ENCODE measurements at regions of chrX and their contacts with region 1.

Region 1: DNA sequence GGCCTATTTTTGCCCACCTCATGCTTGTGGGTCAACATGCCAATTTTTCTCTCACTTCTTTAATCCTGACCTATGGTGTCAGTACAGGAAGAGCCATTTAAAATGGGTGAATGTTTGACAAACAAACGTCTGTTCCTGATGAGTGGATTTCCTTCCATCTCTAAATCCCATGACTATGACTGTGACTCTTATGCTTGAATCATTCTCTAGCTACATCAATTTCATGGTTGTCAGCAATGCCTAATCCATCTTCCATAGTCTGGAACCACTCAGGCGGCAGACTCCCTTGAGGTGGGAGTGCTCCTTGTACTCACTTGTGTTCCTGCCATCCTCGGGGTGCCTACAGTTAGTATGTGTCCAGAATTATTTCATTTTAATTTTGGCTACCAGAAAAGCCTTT is 194.9 kb upstream of the RPS6KA3 start:
- DNase-seq: no peak
- ATAC-seq: no peak
- H3K4me3 ChIP-seq: no peak overlapping the region
- H3K4me3 Mint-ChIP-seq: no peak overlapping the region
- H3K27ac ChIP-seq: no peak overlapping the region
- H3K27ac Mint-ChIP-seq: no peak overlapping the region
- H3K4me1 ChIP-seq: peaks cover 0 to 3% of the 10 kb centered on the region in 2 experiments
- H3K4me1 Mint-ChIP-seq: peaks cover 8 to 23% (median 12%) of the 10 kb centered on the region in 3 donors
- H3K27me3 ChIP-seq: no peaks in the 10 kb centered on the region
- H3K27me3 Mint-ChIP-seq: peaks cover 0 to 29% of the 10 kb centered on the region in 2 donors

Region 2: DNA sequence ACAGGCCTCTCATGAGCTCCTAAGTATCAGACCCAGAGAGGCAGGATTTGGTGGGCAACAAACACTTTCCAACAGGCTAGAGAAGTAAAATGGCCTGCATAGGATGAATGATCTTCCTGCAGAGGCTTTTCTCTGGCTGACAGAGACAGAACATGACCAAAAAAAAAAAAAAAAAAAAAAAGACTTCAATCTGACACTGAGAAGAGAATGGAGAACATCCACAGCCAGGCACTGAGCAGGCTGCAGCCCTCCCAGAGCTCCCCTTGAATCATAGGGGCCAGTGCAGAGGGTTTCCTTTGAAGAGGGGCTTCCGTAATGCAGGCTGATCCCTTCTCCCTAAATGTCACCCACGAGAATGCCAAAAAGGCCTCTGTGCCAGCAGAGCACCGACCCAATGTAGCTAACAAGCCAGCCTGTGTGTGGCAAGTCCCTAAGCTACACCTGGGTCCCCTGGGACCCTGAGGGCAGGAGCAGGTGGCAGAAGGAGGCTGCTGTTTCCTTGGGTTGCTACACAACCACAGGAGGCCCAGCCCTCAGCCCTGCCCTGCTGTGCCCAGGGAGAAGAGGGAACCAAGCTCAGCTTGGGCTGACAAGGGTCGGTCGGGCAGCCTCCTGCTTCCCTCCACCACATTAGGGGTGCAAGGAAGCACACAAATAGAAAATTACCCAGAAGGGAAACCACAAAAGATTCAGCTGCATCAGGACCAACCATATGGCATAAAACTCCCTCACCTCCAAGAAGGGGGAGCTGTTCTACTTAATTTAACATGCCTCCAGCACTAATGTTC is 400.4 kb before region 1 on chrX:
- CTCF ChIA-PET with region 1: interaction called in 1 of 2 experiments, 15 read pairs
- POLR2A ChIA-PET with region 1: no interaction called
- DNase-seq: peak in 5 of 35 experiments; percentile 0 to 33 (median 2)
- ATAC-seq: peak in 2 of 4 experiments; percentile 32 to 52
- H3K4me3 ChIP-seq: no peak overlapping the region
- H3K4me3 Mint-ChIP-seq: no peak overlapping the region
- H3K27ac ChIP-seq: no peak overlapping the region
- H3K27ac Mint-ChIP-seq: no peak overlapping the region
- H3K4me1 ChIP-seq: no peaks in the 10 kb centered on the region
- H3K4me1 Mint-ChIP-seq: peaks cover 7 to 9% (median 8%) of the 10 kb centered on the region in 3 donors
- H3K27me3 ChIP-seq: no peaks in the 10 kb centered on the region
- H3K27me3 Mint-ChIP-seq: no peaks in the 10 kb centered on the region

Region 3: GRCh38 chrX:20309806-20310205 is 151.8 kb before region 1 on chrX:
- CTCF ChIA-PET with region 1: interaction called in 1 of 2 experiments, 10 read pairs
- POLR2A ChIA-PET with region 1: no interaction called
- DNase-seq: no peak
- ATAC-seq: no peak
- H3K4me3 ChIP-seq: no peak overlapping the region
- H3K4me3 Mint-ChIP-seq: no peak overlapping the region
- H3K27ac ChIP-seq: no peak overlapping the region
- H3K27ac Mint-ChIP-seq: no peak overlapping the region
- H3K4me1 ChIP-seq: no peaks in the 10 kb centered on the region
- H3K4me1 Mint-ChIP-seq: peaks cover 0 to 13% (median under 1%) of the 10 kb centered on the region in 3 donors
- H3K27me3 ChIP-seq: no peaks in the 10 kb centered on the region
- H3K27me3 Mint-ChIP-seq: no peaks in the 10 kb centered on the region